Mucosa of descending colon (tissue), 3 donors: ENCODE measurements at regions of chr7 and their contacts with region 1.

Region 1: GRCh38 chr7:21945454-21946227 is at the start of gene CDCA7L:
- DNase-seq: peak; percentile 81 to 86 (median 86)
- ATAC-seq: peak; percentile 87
- H3K4me3 ChIP-seq: peak within 1 kb of the TSS; percentile 22
- H3K4me1 ChIP-seq: peaks cover 20% of the 10 kb centered on the region
- CTCF ChIP-seq: no peak
- total RNA-seq, gene CDCA7L: 20.8 to 33.7 (median 27.0) TPM

Region 2: GRCh38 chr7:21671859-21672258 is 273.8 kb before region 1 on chr7:
- intact Hi-C with region 1: no loop called
- DNase-seq: no peak
- ATAC-seq: no peak
- H3K4me3 ChIP-seq: no peak overlapping the region
- H3K4me1 ChIP-seq: no peaks in the 10 kb centered on the region
- CTCF ChIP-seq: no peak

Region 3: DNA sequence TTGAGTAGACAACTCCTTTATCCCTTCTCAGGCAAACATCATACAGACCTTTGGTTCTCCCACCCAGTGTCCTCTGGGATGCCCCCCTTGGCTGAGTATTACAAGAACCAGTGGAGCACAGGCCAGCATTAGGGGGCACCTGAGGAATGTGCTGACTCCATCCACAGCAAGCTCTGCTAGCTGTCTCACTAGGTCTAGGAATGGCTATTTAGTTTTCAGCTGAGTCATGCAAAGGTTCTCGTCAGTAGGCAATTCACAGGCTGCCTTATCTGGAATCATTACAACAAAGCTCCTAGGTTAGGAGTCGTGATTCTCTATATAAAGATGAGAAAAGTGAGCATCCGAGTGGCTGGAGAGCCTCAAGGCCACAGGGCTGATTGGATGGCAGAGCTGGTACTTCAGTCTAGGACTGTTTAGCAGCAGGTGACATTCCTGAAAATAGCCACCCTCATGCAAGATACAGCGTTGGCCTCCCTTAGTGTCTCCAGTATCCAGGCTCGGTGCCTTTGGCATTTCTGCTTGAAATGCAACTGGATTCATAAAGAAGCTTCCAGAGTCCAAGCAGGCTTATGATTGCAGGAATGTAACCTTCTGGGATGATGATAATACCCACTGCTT is 75.7 kb before region 1 on chr7:
- intact Hi-C with region 1: loop called in 1 of 2 experiments (anchors 10 kb)
- DNase-seq: no peak
- ATAC-seq: peak; percentile 26
- H3K4me3 ChIP-seq: no peak overlapping the region
- H3K4me1 ChIP-seq: no peaks in the 10 kb centered on the region
- CTCF ChIP-seq: no peak

Region 4: GRCh38 chr7:22039670-22040069 is 94.0 kb after region 1 on chr7:
- intact Hi-C with region 1: no loop called
- DNase-seq: no peak
- ATAC-seq: no peak
- H3K4me3 ChIP-seq: no peak overlapping the region
- H3K4me1 ChIP-seq: no peaks in the 10 kb centered on the region
- CTCF ChIP-seq: no peak